HCT116 (cell line): ENCODE measurements at regions of chr19 and their contacts with region 1.

Region 1: DNA sequence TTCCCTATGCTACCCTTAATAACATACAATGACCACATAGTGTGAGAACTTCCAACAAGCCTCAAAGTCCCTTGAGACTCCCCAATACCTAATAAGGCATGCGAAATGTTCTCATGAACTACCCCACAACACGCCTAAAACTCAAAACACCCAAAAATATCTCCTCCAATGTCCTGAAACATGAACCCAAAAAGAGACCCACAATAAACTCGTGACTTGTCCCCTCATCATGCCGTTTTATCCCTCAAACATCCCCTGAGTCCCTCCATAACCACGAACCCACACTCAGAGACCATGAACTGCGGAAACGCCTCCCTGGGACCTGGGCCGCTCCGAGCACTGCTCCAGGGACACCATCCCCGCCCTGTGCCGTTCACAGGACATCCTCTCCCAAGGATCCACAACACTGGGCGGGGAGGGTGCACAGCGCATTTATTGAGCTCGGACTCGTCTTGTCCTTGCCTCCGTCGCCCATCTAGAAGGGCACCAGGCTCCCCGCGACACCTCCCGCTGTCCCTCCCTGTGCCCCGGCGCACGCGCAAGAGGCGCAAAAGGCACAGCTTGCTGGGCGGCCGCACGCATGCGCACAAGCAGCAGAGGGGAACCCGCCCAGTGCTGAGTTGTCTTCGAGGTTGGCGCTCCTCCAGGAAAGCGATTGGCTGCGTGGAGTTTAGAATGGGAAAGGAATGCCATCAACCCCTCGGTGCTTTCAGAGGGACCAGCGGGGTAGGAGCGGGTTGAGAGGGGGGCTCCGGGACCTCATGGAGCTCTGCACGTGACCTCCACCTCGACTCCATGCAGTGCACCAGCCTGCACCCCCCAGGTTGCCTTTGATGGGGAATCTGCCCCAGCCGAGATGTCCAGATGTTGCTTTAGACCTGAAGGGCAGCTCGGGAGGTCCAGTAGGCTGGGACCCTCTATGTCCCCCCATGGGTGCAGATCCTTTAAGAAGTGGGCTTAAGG is 8.8 kb downstream of the FXYD3 start:
- DNase-seq: peak; percentile 70
- ATAC-seq: peak; percentile 96
- H3K4me3 ChIP-seq: peak overlapping the region; percentile 41 to 54
- H3K27ac ChIP-seq: peak overlapping the region; percentile 30; the same call in 1 of the 2 replicates
- H3K4me1 ChIP-seq: peaks cover 21 to 47% of the 10 kb centered on the region in 2 experiments
- H3K27me3 ChIP-seq: no peaks in the 10 kb centered on the region
- CTCF ChIP-seq: no peak
- POLR2A ChIP-seq: peak; percentile 57
- RAD21 ChIP-seq: no peak

Region 2: DNA sequence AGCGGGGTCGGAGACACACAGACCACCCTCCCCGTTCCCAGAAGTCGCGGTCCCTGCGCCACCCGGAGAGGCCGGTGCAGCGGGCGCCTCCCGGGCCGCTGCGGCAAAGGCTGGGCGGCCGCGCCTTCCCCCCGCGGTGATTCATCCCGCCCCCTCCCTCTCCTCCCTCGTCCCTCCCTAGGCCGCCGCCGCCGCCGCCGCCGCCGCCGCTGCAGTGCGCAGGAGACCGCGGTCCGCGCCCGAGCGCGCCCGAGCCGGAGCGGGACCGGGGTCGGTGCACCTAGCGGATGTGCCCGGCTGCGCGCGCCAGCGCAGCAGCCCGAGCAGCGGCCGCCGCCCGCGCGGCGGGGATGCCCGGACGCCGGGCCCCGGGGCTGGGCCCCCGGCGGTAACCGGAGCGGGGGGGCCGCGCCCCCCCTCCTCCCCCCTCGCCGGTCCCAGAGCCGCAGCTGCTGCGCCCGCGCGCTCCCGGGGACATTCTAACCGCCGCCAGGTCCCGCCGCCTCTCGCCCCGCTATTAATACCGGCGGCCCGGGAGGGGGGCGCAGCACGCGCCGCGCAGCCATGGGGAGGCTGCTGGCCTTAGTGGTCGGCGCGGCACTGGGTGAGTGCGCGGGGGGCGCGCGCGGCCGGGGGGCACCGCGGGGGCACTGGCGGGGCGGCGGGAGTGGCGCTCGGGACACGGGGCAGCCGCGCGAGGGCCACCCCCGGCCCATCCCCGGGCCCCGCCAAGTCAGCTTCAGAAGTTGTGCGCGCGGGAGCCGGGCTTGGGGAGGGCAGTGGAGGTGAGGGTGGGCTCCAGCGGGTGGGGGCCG is 93.9 kb before region 1 on chr19 and contains the start of gene SCN1B:
- CTCF ChIA-PET with region 1: no interaction called
- POLR2A ChIA-PET with region 1: no interaction called
- RAD21 ChIA-PET with region 1: no interaction called
- intact Hi-C with region 1: no loop called
- DNase-seq: peak; percentile 22
- ATAC-seq: peak; percentile 82
- H3K4me3 ChIP-seq: peak within 1 kb of the TSS; percentile 43 to 57
- H3K27ac ChIP-seq: peak within 1 kb of the TSS; percentile 43; the same call in 1 of the 2 replicates
- H3K4me1 ChIP-seq: peaks cover 9 to 27% of the 10 kb centered on the region in 2 experiments; a peak in 3 of 4 replicates
- H3K27me3 ChIP-seq: no peaks in the 10 kb centered on the region
- CTCF ChIP-seq: no peak
- POLR2A ChIP-seq: no peak
- RAD21 ChIP-seq: no peak
- total RNA-seq, gene SCN1B: 6.6 TPM

Region 3: DNA sequence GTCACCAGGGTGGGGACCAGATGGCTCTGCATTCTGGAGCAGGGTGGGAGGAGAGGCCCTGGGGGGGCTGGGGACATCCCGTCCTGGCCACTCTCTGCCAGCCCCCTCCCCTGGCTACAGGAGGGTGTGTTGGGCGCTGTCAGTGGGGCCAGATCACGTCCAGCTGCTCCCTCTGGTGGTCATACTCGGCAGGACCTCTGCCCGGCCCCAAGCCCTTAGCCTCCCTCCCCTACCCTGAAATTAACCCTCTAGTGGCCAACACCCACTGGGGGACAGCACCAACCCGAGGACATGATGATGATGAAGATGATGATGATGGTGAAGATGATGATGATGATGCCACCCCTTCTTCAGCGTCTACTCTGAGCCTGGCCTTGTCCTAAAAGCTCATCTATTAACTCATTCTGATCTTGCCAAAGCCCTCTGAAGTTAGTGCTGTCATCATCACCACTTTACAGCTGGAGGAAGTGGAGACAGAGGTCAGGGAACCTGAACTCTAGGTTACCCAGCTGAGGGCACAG is 11.1 kb after region 1 on chr19:
- CTCF ChIA-PET with region 1: interaction called, 12 read pairs
- POLR2A ChIA-PET with region 1: no interaction called
- RAD21 ChIA-PET with region 1: no interaction called
- intact Hi-C with region 1: no loop called
- DNase-seq: peak; percentile 51
- ATAC-seq: peak; percentile 97
- H3K4me3 ChIP-seq: no peak overlapping the region
- H3K27ac ChIP-seq: no peak overlapping the region
- H3K4me1 ChIP-seq: no peaks in the 10 kb centered on the region; a peak in 1 of 4 replicates
- H3K27me3 ChIP-seq: no peaks in the 10 kb centered on the region
- CTCF ChIP-seq: peak; percentile 83 to 88 (median 87)
- POLR2A ChIP-seq: no peak
- RAD21 ChIP-seq: peak; percentile 84